MCF 10A (cell line): ENCODE measurements at regions of chr2 and their contacts with region 1.

Region 1: GRCh38 chr2:46650556-46651001 is 171.2 kb downstream of the TMEM247 start:
- DNase-seq: peak; percentile 84
- H3K4me3 Mint-ChIP-seq: no peak overlapping the region
- H3K27ac Mint-ChIP-seq: no peak overlapping the region
- H3K4me1 Mint-ChIP-seq: peaks cover 34% of the 10 kb centered on the region
- H3K27me3 Mint-ChIP-seq: no peaks in the 10 kb centered on the region
- CTCF ChIP-seq: peak; percentile 84

Region 2: GRCh38 chr2:46632349-46632748 is 18.2 kb before region 1 on chr2:
- CTCF ChIA-PET with region 1: interaction called, 65 read pairs
- POLR2A ChIA-PET with region 1: interaction called, 35 read pairs
- intact Hi-C with region 1: loop called (anchors 1 kb)
- DNase-seq: peak; percentile 68
- H3K4me3 Mint-ChIP-seq: no peak overlapping the region
- H3K27ac Mint-ChIP-seq: no peak overlapping the region
- H3K4me1 Mint-ChIP-seq: no peaks in the 10 kb centered on the region
- H3K27me3 Mint-ChIP-seq: no peaks in the 10 kb centered on the region
- CTCF ChIP-seq: peak; percentile 56

Region 3: GRCh38 chr2:46776687-46777327 is 126.2 kb after region 1 on chr2:
- CTCF ChIA-PET with region 1: interaction called, 10 read pairs
- POLR2A ChIA-PET with region 1: interaction called, 3 read pairs
- intact Hi-C with region 1: no loop called
- DNase-seq: peak; percentile 81
- H3K4me3 Mint-ChIP-seq: no peak overlapping the region
- H3K27ac Mint-ChIP-seq: no peak overlapping the region
- H3K4me1 Mint-ChIP-seq: peaks cover 14% of the 10 kb centered on the region
- H3K27me3 Mint-ChIP-seq: no peaks in the 10 kb centered on the region
- CTCF ChIP-seq: peak; percentile 55

Region 4: GRCh38 chr2:46847235-46848068 is 196.9 kb after region 1 on chr2:
- CTCF ChIA-PET with region 1: interaction called, 8 read pairs
- POLR2A ChIA-PET with region 1: interaction called, 11 read pairs
- intact Hi-C with region 1: no loop called
- DNase-seq: peak; percentile 98
- H3K4me3 Mint-ChIP-seq: peak overlapping the region; percentile 47
- H3K27ac Mint-ChIP-seq: peak overlapping the region; percentile 70
- H3K4me1 Mint-ChIP-seq: peaks cover 52% of the 10 kb centered on the region
- H3K27me3 Mint-ChIP-seq: no peaks in the 10 kb centered on the region
- CTCF ChIP-seq: no peak

Region 5: GRCh38 chr2:46887028-46887885 is 236.7 kb after region 1 on chr2:
- CTCF ChIA-PET with region 1: interaction called, 50 read pairs
- POLR2A ChIA-PET with region 1: interaction called, 6 read pairs
- intact Hi-C with region 1: loop called (anchors 1 kb)
- DNase-seq: no peak
- H3K4me3 Mint-ChIP-seq: no peak overlapping the region
- H3K27ac Mint-ChIP-seq: no peak overlapping the region
- H3K4me1 Mint-ChIP-seq: peaks cover 6% of the 10 kb centered on the region
- H3K27me3 Mint-ChIP-seq: no peaks in the 10 kb centered on the region
- CTCF ChIP-seq: no peak